ENCODE measurements at regions of chr16 and their contacts with region 1.

Region 1: GRCh38 chr16:67546761-67547422 is 15.4 kb upstream of the CTCF start:
- DNase-seq: peak; percentile 72 to 81
- ATAC-seq: peak; percentile 48 to 72 (median 62)
- H3K4me3 ChIP-seq: peak overlapping the region in 1 of 10 donors; percentile 12
- H3K27ac ChIP-seq: peak overlapping the region in 9 of 10 donors; percentile 12 to 73 (median 33)
- H3K4me1 ChIP-seq: peaks cover 16 to 81% (median 49%) of the 10 kb centered on the region in 9 donors
- H3K27me3 ChIP-seq: no peaks in the 10 kb centered on the region
- CTCF ChIP-seq: peak; percentile 91 to 97 (median 95)

Region 2: GRCh38 chr16:67641779-67642708 is 95.2 kb after region 1 on chr16:
- intact Hi-C with region 1: loop called in 3 of 10 experiments (anchors 10 kb)
- DNase-seq: peak; percentile 78 to 81
- ATAC-seq: peak; percentile 72 to 97 (median 91)
- H3K4me3 ChIP-seq: no peak overlapping the region
- H3K27ac ChIP-seq: peak overlapping the region in 7 of 10 donors; percentile 25 to 58 (median 37)
- H3K4me1 ChIP-seq: peaks cover 0 to 37% (median 17%) of the 10 kb centered on the region in 9 donors
- H3K27me3 ChIP-seq: peaks cover 9 to 28% (median 23%) of the 10 kb centered on the region in 7 donors
- CTCF ChIP-seq: peak in 1 of 9 donors; percentile 11

Region 3: DNA sequence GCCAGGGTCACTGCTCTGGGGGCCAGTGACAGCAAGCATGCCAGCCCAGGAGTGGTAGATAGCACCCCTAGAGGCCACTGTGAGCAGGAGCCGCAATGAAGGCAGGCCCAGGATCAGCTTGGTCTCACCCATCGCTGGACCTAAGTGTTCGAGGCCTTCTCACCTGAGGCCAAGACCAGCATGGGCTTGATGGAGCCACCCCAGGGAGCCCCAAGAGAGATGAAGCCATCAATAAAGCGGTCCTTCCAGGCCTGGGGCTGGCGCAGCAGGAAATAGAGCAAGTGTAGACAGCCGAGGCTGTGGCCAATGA is 395.3 kb after region 1 on chr16:
- intact Hi-C with region 1: loop called in 1 of 10 experiments (anchors 10 kb)
- DNase-seq: no peak
- ATAC-seq: peak in 6 of 8 donors; percentile 3 to 33 (median 20)
- H3K4me3 ChIP-seq: no peak overlapping the region
- H3K27ac ChIP-seq: peak overlapping the region in 5 of 10 donors; percentile 21 to 83 (median 74)
- H3K4me1 ChIP-seq: peaks cover 16 to 81% (median 50%) of the 10 kb centered on the region in 9 donors
- H3K27me3 ChIP-seq: no peaks in the 10 kb centered on the region
- CTCF ChIP-seq: peak; percentile 25 to 67 (median 59)

Region 4: DNA sequence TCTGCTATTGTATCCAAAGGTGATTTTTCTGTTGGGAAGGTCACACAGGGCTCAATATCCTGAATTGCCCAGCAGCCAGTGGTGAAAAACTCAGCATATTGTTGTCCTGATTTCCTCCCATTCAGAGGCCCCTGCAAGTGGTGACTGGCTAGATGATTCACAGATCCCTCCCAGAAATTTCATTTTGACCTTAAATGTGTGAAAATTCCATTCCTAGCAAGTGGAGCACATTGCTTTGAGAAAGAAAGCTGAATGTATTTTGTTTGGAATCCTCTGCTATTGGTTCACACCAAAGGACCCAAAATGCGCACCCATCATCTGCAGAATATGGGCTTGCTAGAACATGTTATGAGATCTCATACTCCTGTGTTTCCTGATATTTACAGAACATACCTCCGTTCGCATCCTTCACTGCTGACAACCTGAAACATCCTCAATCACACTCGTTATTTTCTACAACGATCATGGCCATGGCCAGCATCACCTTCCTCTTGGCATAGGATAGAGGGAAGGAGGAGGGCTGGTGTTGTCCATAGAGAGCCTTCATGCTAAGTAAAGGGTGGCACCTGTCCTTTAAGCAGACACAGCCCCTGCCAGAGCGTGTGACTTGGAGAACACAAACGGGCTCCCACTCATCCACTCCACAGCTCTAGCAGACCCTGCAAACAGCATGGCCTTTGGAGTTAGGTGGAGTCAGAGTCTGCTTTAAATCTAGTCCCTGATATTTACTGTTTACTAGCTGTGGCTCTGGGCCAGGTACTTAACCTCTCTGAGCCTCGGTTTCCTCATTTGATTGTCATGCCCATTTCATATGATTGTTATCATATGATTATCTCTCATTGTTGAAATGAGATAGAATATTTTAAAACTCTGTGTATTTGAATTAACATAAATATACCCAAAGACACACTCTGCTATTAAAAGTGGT is 1988.5 kb after region 1 on chr16:
- intact Hi-C with region 1: no loop called
- DNase-seq: no peak
- ATAC-seq: peak in 1 of 8 donors; percentile 19
- H3K4me3 ChIP-seq: no peak overlapping the region
- H3K27ac ChIP-seq: no peak overlapping the region
- H3K4me1 ChIP-seq: peaks cover 0 to 27% (median 3%) of the 10 kb centered on the region in 9 donors
- H3K27me3 ChIP-seq: peaks cover 0 to 10% (median 0%) of the 10 kb centered on the region in 7 donors
- CTCF ChIP-seq: no peak

Measured in heart right ventricle (tissue), 16 donors.